Activated T-helper 2 cell treated with anti-CD3 and anti-CD28 coated beads, Interferon-gamma antibody, Interleukin-2, Interleukin-4, amounts not matched to agents 10 μg/mL and 5 μg/mL and 100 μg/mL, durations not matched to agents 14 hours and 24 hours and 36 hours (primary cell): ENCODE measurements at regions of chr6 and their contacts with region 1.

Region 1: DNA sequence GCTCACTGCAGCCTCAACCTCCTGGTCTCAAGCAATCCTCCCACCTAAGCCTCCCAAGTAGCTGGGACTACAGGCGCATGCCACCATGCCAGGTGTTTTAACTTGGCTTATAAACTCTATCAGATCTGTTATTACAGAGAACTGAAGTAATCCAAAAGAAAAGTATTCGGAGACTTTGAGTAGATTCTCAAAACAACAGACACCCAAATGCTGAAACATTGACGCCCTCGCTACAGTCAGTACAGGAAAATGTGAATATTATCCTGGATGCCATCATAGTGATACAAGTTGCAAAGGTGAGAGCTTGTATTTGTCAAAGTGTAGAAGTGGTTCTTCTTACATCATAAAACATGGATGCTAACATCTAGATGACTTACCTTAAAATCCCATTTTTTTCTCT is 108.7 kb upstream of the EDN1 start:
- DNase-seq: no peak
- H3K4me3 Mint-ChIP-seq: no peak overlapping the region
- H3K27ac Mint-ChIP-seq: no peak overlapping the region
- H3K4me1 Mint-ChIP-seq: peaks cover 8% of the 10 kb centered on the region
- H3K27me3 Mint-ChIP-seq: peaks cover 15% of the 10 kb centered on the region

Region 2: GRCh38 chr6:11847515-11848345 is 333.8 kb before region 1 on chr6:
- intact Hi-C with region 1: no loop called
- DNase-seq: no peak
- H3K4me3 Mint-ChIP-seq: no peak overlapping the region
- H3K27ac Mint-ChIP-seq: no peak overlapping the region
- H3K4me1 Mint-ChIP-seq: no peaks in the 10 kb centered on the region
- H3K27me3 Mint-ChIP-seq: no peaks in the 10 kb centered on the region

Region 3: DNA sequence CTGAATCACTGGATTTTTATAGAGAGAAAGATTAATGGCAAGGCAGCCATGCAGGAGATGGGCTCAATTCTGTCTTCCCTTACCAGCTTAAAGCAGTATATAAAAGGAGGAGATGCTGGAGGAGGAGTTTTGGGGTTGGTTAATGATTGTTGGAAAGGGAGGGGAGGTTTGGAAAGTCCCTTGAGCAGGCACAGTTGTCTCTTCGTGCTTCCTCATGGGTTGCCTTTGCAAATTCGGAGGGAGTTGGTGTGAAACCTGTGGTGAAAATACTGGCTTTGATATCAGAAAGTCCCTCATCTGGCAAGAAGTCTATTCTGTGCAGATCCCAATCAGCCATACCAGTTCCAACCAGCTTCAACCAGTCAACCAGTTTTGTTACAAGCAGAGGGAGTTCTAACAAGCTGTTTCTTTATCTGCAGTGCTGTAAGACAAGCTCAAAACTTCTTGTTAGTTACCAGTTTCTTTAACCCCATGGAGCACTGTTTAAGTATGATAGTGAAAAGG is 62.3 kb before region 1 on chr6:
- intact Hi-C with region 1: no loop called
- DNase-seq: peak; percentile 61
- H3K4me3 Mint-ChIP-seq: peak overlapping the region; percentile 11
- H3K27ac Mint-ChIP-seq: peak overlapping the region; percentile 75
- H3K4me1 Mint-ChIP-seq: peaks cover 47% of the 10 kb centered on the region
- H3K27me3 Mint-ChIP-seq: no peaks in the 10 kb centered on the region

Region 4: GRCh38 chr6:12221856-12222255 is 40.4 kb after region 1 on chr6:
- intact Hi-C with region 1: loop called (anchors 2 kb)
- DNase-seq: no peak
- H3K4me3 Mint-ChIP-seq: no peak overlapping the region
- H3K27ac Mint-ChIP-seq: no peak overlapping the region
- H3K4me1 Mint-ChIP-seq: no peaks in the 10 kb centered on the region
- H3K27me3 Mint-ChIP-seq: peaks cover 16% of the 10 kb centered on the region